T-cell (primary cell): ENCODE measurements at regions of chr1 and their contacts with region 1.

Region 1: DNA sequence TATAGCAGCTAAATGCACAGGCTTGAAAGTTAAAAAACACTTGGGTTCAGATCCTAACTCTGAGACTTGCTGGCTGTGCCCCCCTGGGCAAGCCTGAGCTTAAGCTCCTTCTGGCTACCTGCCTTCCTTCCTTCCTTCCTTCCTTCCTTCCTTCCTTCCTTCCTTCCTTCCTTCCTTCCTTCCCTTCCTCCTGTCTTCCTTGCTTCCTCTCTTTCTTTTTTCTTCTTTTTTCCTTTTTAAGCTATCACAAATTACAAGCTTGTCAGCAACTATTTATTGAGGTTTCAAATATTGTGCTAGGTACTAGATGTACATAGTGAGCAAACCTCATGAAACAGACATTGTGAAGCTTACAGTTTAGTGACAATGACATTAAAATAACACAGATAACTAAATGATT is 15.1 kb downstream of the SGIP1 start:
- DNase-seq: no peak
- ATAC-seq: no peak
- H3K4me3 ChIP-seq: no peak overlapping the region
- H3K4me3 Mint-ChIP-seq: no peak overlapping the region
- H3K27ac ChIP-seq: no peak overlapping the region
- H3K27ac Mint-ChIP-seq: no peak overlapping the region
- H3K4me1 ChIP-seq: peaks cover 0 to 6% of the 10 kb centered on the region in 2 experiments
- H3K4me1 Mint-ChIP-seq: peaks cover 0 to 10% (median 2%) of the 10 kb centered on the region in 3 donors
- H3K27me3 ChIP-seq: no peaks in the 10 kb centered on the region
- H3K27me3 Mint-ChIP-seq: peaks cover 3 to 15% of the 10 kb centered on the region in 2 donors

Region 2: DNA sequence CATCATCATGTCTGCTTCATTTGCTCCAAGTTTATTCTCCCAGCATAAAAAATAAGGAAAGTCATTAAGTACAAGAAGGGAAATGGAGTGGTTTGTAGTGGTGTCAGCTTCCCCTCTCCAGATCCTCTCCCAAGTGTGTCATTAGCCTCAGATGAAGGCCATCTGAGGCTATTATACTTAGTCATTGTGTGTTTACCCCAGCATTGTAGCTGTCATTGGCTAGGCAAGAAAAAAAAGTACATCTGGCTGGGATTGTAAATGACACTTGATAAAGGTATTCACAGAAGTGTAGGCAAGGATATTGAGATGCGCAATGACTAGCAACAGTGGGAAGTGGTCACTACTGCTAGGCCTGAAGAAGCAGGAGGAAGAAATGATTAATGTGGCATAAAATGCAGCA is 332.0 kb before region 1 on chr1:
- CTCF ChIA-PET with region 1: interaction called in 1 of 2 experiments, 15 read pairs
- POLR2A ChIA-PET with region 1: no interaction called
- DNase-seq: no peak
- ATAC-seq: no peak
- H3K4me3 ChIP-seq: no peak overlapping the region
- H3K4me3 Mint-ChIP-seq: no peak overlapping the region
- H3K27ac ChIP-seq: no peak overlapping the region
- H3K27ac Mint-ChIP-seq: no peak overlapping the region
- H3K4me1 ChIP-seq: peaks cover 0 to 4% of the 10 kb centered on the region in 2 experiments
- H3K4me1 Mint-ChIP-seq: peaks cover 12 to 13% (median 13%) of the 10 kb centered on the region in 3 donors
- H3K27me3 ChIP-seq: no peaks in the 10 kb centered on the region
- H3K27me3 Mint-ChIP-seq: no peaks in the 10 kb centered on the region

Region 3: GRCh38 chr1:66335859-66336640 is 213.0 kb before region 1 on chr1:
- CTCF ChIA-PET with region 1: no interaction called
- POLR2A ChIA-PET with region 1: no interaction called
- DNase-seq: peak; percentile 54 to 91 (median 77)
- ATAC-seq: peak; percentile 74 to 90 (median 76)
- H3K4me3 ChIP-seq: peak overlapping the region; percentile 53 to 77
- H3K4me3 Mint-ChIP-seq: peak overlapping the region; percentile 96 to 99 (median 98)
- H3K27ac ChIP-seq: peak overlapping the region; percentile 95
- H3K27ac Mint-ChIP-seq: peak overlapping the region; percentile 98
- H3K4me1 ChIP-seq: peaks cover 31 to 45% of the 10 kb centered on the region in 2 experiments
- H3K4me1 Mint-ChIP-seq: peaks cover 56 to 72% (median 58%) of the 10 kb centered on the region in 3 donors
- H3K27me3 ChIP-seq: no peaks in the 10 kb centered on the region
- H3K27me3 Mint-ChIP-seq: no peaks in the 10 kb centered on the region

Region 4: GRCh38 chr1:66460776-66461175 is 88.2 kb before region 1 on chr1:
- CTCF ChIA-PET with region 1: no interaction called
- POLR2A ChIA-PET with region 1: no interaction called
- DNase-seq: no peak
- ATAC-seq: no peak
- H3K4me3 ChIP-seq: no peak overlapping the region
- H3K4me3 Mint-ChIP-seq: no peak overlapping the region
- H3K27ac ChIP-seq: no peak overlapping the region
- H3K27ac Mint-ChIP-seq: no peak overlapping the region
- H3K4me1 ChIP-seq: no peaks in the 10 kb centered on the region
- H3K4me1 Mint-ChIP-seq: no peaks in the 10 kb centered on the region
- H3K27me3 ChIP-seq: no peaks in the 10 kb centered on the region
- H3K27me3 Mint-ChIP-seq: peaks cover 5 to 10% of the 10 kb centered on the region in 2 donors